ENCODE measurements at regions of chr5 and their contacts with region 1.

Region 1: GRCh38 chr5:93582677-93583438 is at the start of gene NR2F1:
- DNase-seq: no peak
- H3K4me3 ChIP-seq: peak within 1 kb of the TSS; percentile 17
- CTCF ChIP-seq: peak in 1 of 3 donors; percentile 53
- POLR2A ChIP-seq: no peak
- total RNA-seq, gene NR2F1: 0.72 to 5.9 (median 2.7) TPM

Region 2: DNA sequence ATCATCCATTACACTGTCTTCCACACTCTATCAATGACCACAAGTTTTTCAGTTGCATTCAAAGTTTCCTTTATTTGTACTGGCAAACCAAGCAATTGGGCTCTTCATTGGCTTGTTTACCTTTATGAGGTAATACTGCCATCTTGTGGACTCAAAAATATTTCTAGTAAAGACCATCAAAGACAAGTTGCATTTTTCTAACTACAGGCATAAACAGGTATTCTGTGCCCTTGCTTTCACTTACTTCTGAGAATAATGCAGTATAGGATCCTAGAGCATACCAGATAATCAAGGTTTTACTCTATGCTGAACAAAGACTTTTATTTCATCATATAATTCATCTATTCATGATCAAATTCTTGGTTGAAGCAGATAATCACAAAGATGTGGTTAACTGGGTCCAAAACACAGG is 332.3 kb after region 1 on chr5:
- intact Hi-C with region 1: loop called (anchors 10 kb)
- DNase-seq: no peak
- H3K4me3 ChIP-seq: no peak overlapping the region
- CTCF ChIP-seq: no peak
- POLR2A ChIP-seq: no peak